ENCODE measurements at regions of chr2 and their contacts with region 1.

Region 1: GRCh38 chr2:238024986-238025385 is 35.8 kb upstream of the SCLY start:
- DNase-seq: peak; percentile 77
- ATAC-seq: peak; percentile 100
- H3K4me3 Mint-ChIP-seq: peak overlapping the region; percentile 32
- H3K27ac Mint-ChIP-seq: peak overlapping the region; percentile 84
- H3K4me1 Mint-ChIP-seq: peaks cover 20% of the 10 kb centered on the region
- H3K27me3 Mint-ChIP-seq: no peaks in the 10 kb centered on the region

Region 2: DNA sequence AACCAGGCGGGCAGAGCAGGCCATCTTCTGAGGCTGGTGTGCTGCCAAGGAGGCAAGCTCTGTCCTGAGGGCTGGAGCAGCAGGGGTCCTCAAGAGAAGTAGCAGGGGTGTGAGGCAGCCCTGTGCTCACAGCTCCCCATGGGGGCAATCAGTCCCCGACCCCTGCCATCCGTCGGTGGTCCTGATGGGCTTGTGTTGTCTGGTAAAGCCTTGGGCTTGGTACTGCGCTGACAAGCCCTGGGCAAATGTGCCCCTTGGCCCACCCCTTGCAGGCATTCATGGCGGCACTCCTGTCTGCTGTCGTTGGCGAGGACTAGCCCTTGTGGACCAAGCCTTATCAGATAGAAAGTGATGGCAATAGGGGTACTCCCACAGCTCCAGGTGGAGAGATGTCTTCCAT is 13.2 kb after region 1 on chr2:
- CTCF ChIA-PET with region 1: interaction called, 12 read pairs
- POLR2A ChIA-PET with region 1: no interaction called
- intact Hi-C with region 1: no loop called
- DNase-seq: no peak
- ATAC-seq: no peak
- H3K4me3 Mint-ChIP-seq: no peak overlapping the region
- H3K27ac Mint-ChIP-seq: no peak overlapping the region
- H3K4me1 Mint-ChIP-seq: no peaks in the 10 kb centered on the region
- H3K27me3 Mint-ChIP-seq: no peaks in the 10 kb centered on the region

Region 3: DNA sequence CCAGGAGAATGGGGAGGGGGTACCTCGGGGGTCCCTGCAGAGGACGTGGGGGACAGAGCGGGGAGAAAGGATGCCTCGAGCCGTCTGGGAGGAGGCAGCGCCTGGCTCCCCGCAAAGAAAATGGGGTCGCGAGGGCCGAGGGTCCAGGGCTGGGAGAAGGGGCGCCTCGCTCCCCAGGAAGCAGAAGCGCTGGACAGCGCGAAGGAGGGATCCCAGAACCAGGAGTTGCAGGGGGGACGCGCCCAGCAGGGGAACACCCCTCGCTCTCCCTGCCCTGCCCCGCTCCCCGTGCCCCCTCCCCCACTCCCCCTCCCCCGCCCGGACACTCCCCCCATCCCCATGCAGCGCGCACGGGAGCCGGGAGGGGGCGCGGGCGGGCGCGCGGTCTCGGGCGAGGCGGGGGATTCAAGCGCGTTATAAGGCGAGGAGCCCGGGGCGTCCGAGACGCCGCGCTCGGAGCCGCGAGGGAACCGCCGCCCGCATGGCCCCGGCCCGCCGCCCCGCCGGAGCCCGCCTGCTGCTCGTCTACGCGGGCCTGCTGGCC is 133.6 kb after region 1 on chr2 and contains the start of gene ERFE:
- CTCF ChIA-PET with region 1: no interaction called
- POLR2A ChIA-PET with region 1: no interaction called
- intact Hi-C with region 1: no loop called
- DNase-seq: peak; percentile 77
- ATAC-seq: peak; percentile 88
- H3K4me3 Mint-ChIP-seq: peak within 1 kb of the TSS; percentile 61
- H3K27ac Mint-ChIP-seq: no peak within 1 kb of the TSS
- H3K4me1 Mint-ChIP-seq: peaks cover 5% of the 10 kb centered on the region
- H3K27me3 Mint-ChIP-seq: peaks cover 13% of the 10 kb centered on the region
- total RNA-seq, gene ERFE: 0.07 to 0.39 TPM

Measured in activated CD4-positive, alpha-beta T cell treated with anti-CD3 and anti-CD28 coated beads for 36 hours (primary cell).